ENCODE measurements at regions of chr12 and their contacts with region 1.

Region 1: GRCh38 chr12:25438638-25439037 is 114.4 kb downstream of the LMNTD1 start:
- DNase-seq: no peak
- H3K4me3 ChIP-seq: no peak overlapping the region
- CTCF ChIP-seq: no peak
- POLR2A ChIP-seq: no peak

Region 2: DNA sequence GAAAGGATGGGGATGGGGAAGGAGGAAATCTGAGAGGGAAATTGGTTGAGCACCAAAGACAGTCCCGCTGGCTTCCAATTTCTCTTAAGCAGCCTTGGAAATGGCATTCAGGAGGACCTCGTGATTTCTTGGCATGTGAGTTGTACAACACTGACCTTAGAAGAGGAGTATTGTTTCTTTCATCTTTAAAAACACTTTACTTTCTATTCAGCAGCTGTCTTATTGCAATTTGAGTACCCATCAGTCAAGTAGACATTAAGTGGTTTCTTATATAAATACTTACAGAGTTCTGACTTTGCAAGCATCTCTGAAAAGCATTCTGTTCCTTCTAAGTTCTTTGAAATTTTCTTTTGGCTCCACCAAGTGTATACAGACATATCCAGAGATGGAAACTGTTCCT is 31.2 kb after region 1 on chr12:
- intact Hi-C with region 1: no loop called
- DNase-seq: no peak
- H3K4me3 ChIP-seq: no peak overlapping the region
- CTCF ChIP-seq: no peak
- POLR2A ChIP-seq: no peak

Region 3: GRCh38 chr12:26027401-26027800 is 588.8 kb after region 1 on chr12:
- intact Hi-C with region 1: loop called (anchors 2 kb)
- DNase-seq: no peak
- H3K4me3 ChIP-seq: no peak overlapping the region
- CTCF ChIP-seq: no peak
- POLR2A ChIP-seq: no peak